Vagina (tissue), 2 donors: ENCODE measurements at regions of chr18 and their contacts with region 1.

Region 1: DNA sequence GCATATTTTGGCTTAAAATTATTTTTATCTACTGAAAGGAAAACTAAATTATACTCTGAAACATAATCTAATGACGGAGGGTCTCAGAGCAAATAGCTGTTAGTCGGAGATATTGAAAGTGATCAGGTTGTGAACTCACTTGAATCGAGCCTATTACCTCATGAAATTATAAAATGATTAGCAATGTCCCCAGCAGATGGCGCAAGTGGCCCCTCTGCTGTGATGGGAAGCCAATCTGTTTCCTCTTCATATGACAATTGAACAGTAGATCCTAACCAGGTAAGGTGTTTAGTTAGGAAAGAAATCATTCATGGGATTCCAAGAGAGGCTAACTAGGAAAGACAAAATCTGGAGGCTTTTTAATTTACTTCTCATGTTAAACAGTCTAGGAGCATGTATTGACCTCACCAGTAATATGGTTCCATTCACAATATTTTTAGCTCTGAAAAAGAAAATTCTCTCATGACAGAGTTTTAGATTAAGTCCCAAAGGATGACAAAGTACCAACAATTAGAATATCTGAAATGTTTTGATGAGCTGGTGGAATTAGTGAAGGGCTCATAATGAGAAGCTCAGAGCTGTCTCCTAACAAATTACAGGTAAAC is 29.9 kb upstream of the MPPE1 start:
- DNase-seq: no peak
- H3K4me3 ChIP-seq: no peak overlapping the region
- H3K27ac ChIP-seq: no peak overlapping the region
- H3K4me1 ChIP-seq: no peaks in the 10 kb centered on the region
- H3K27me3 ChIP-seq: no peaks in the 10 kb centered on the region
- CTCF ChIP-seq: peak; percentile 50 to 87 (median 71)
- POLR2A ChIP-seq: no peak

Region 2: GRCh38 chr18:11733031-11733430 is 204.9 kb before region 1 on chr18:
- intact Hi-C with region 1: no loop called
- DNase-seq: no peak
- H3K4me3 ChIP-seq: peak overlapping the region in 1 of 2 donors; percentile 22
- H3K27ac ChIP-seq: no peak overlapping the region
- H3K4me1 ChIP-seq: no peaks in the 10 kb centered on the region
- H3K27me3 ChIP-seq: no peaks in the 10 kb centered on the region
- CTCF ChIP-seq: peak; percentile 65 to 81 (median 74)
- POLR2A ChIP-seq: no peak

Region 3: GRCh38 chr18:11995445-11996189 is 57.6 kb after region 1 on chr18:
- intact Hi-C with region 1: loop called (anchors 5 kb)
- DNase-seq: no peak
- H3K4me3 ChIP-seq: peak overlapping the region in 1 of 2 donors; percentile 16
- H3K27ac ChIP-seq: peak overlapping the region; percentile 71
- H3K4me1 ChIP-seq: peaks cover 46% of the 10 kb centered on the region
- H3K27me3 ChIP-seq: no peaks in the 10 kb centered on the region
- CTCF ChIP-seq: peak in 2 of 3 experiments; percentile 64 to 77
- POLR2A ChIP-seq: no peak

Region 4: GRCh38 chr18:12005538-12006487 is 67.8 kb after region 1 on chr18:
- intact Hi-C with region 1: no loop called
- DNase-seq: no peak
- H3K4me3 ChIP-seq: no peak overlapping the region
- H3K27ac ChIP-seq: no peak overlapping the region
- H3K4me1 ChIP-seq: peaks cover 7% of the 10 kb centered on the region
- H3K27me3 ChIP-seq: no peaks in the 10 kb centered on the region
- CTCF ChIP-seq: no peak
- POLR2A ChIP-seq: no peak

Region 5: DNA sequence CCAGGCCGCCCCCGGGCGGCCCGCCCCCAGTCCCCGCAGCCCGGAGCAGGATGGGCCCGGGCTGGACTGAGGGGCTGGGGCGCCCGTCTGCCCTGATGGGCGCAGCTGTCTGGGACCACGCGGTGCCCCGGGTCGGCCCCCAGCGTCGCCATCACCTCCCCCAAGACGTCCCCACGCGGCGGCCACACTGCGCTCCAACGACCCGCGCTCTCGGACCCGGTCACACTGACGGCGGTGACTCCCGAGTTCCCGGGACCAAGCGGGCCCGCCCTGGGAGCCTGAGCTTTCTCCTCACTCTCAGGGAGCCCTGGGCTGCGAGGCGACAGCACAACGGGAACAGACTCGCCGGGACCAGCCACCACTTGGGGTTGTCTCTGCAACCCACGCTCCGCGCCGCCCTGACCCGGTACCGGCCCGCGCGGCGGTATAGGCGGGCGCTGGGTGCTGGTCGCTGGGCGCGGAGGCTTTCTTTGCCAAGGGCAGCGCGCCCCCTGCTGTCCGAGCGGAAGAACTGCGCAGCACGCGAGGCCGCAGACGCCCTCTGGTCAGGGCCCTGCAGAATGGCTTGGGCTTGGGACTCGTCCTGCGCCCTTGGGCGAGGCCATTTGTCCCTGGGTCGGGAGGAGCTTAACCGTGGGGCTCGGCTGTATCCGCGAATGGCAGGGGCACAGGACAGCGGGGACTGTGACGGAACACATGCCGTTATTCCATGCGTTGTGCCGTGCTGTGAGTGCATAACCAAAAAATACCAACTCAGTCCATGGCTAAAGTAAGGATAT is 100.9 kb after region 1 on chr18:
- intact Hi-C with region 1: loop called (anchors 5 kb)
- DNase-seq: peak in 1 of 2 donors; percentile 91
- H3K4me3 ChIP-seq: peak overlapping the region; percentile 50
- H3K27ac ChIP-seq: peak overlapping the region; percentile 73
- H3K4me1 ChIP-seq: peaks cover 10% of the 10 kb centered on the region
- H3K27me3 ChIP-seq: no peaks in the 10 kb centered on the region
- CTCF ChIP-seq: peak; percentile 81 to 99 (median 98)
- POLR2A ChIP-seq: no peak